A549 (cell line): ENCODE measurements at regions of chr17 and their contacts with region 1.

Region 1: GRCh38 chr17:29931231-29931932 is 1.4 kb upstream of the SSH2 start:
- DNase-seq: peak; percentile 67 to 85
- ATAC-seq: peak; percentile 60 to 75
- H3K4me3 ChIP-seq: peak overlapping the region; percentile 78
- H3K27ac ChIP-seq: peak overlapping the region; percentile 91 to 95; a peak in 4 of 6 replicates
- H3K4me1 ChIP-seq: peaks cover 31% of the 10 kb centered on the region
- CTCF ChIP-seq: peak; percentile 99
- EP300 ChIP-seq: no peak
- POLR2A ChIP-seq: no peak
- RAD21 ChIP-seq: peak; percentile 91 to 93

Region 2: DNA sequence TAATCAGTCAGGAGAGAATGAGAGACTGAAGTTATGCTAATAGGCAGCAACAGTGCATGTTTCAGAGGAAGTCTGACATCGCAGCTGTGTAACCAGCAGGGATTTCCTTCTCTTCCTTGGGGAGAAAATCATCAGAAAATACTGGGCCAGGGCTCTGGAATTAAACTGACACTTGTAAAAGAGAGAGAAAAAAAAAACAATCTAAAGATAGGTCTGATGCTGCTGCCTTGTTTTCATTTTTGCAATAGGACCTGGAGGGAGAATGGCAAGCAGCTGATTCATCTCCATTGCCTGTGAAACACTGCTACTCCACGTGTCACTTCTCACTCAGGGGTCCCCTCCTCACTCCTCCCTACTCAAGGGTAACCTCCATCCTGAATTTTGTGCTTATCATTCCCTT is 291.0 kb before region 1 on chr17:
- CTCF ChIA-PET with region 1: interaction called, 100 read pairs
- POLR2A ChIA-PET with region 1: interaction called, 39 read pairs
- DNase-seq: no peak
- ATAC-seq: no peak
- H3K4me3 ChIP-seq: no peak overlapping the region
- H3K27ac ChIP-seq: peak overlapping the region; percentile 10 to 82; a peak in 3 of 6 replicates
- H3K4me1 ChIP-seq: peaks cover 47% of the 10 kb centered on the region
- CTCF ChIP-seq: no peak
- EP300 ChIP-seq: no peak
- POLR2A ChIP-seq: no peak
- RAD21 ChIP-seq: no peak

Region 3: GRCh38 chr17:29826114-29826692 is 105.2 kb before region 1 on chr17:
- CTCF ChIA-PET with region 1: interaction called, 536 read pairs
- POLR2A ChIA-PET with region 1: no interaction called
- DNase-seq: no peak
- ATAC-seq: no peak
- H3K4me3 ChIP-seq: no peak overlapping the region
- H3K27ac ChIP-seq: no peak overlapping the region
- H3K4me1 ChIP-seq: no peaks in the 10 kb centered on the region
- CTCF ChIP-seq: no peak
- EP300 ChIP-seq: no peak
- POLR2A ChIP-seq: no peak
- RAD21 ChIP-seq: no peak

Region 4: GRCh38 chr17:29862127-29862526 is 69.3 kb before region 1 on chr17:
- CTCF ChIA-PET with region 1: interaction called, 32 read pairs
- POLR2A ChIA-PET with region 1: no interaction called
- DNase-seq: no peak
- ATAC-seq: no peak
- H3K4me3 ChIP-seq: no peak overlapping the region
- H3K27ac ChIP-seq: no peak overlapping the region
- H3K4me1 ChIP-seq: no peaks in the 10 kb centered on the region
- CTCF ChIP-seq: no peak
- EP300 ChIP-seq: no peak
- POLR2A ChIP-seq: no peak
- RAD21 ChIP-seq: no peak

Region 5: DNA sequence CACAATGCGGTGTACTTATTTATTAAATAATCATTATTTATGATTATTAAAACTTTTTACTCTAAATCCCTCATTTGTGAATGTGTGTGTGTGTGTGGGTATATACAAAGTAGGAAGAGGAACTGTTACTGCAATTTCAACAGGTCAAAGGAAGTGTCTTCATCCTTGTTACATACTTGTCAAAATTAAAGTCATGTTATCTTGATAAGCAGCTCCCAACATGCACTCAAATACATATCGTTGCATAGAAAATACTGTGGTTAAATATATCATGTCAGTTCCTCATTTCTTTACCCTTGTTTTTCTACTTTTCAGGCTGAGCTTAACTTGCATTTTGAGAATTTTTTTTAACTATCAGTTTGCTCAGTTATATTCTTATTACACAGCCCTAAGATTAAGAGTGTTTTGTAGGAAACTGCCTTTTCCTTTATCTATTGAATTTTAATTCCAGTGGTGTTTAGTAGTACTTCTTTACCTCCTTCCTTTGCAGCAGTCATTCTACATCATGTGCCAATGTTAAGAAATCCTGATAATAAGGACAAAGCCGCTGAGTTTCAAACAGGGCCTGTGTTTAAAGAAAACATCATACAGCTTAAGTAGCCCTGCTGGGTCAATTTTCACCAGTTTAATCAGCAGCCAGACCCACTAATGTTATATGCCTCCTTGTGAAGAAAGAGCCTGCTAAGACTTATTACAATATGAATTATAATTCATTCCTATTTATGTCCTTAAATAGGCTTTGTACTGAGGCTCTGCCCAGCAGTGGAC is 17.2 kb after region 1 on chr17:
- CTCF ChIA-PET with region 1: interaction called, 77 read pairs
- POLR2A ChIA-PET with region 1: no interaction called
- DNase-seq: no peak
- ATAC-seq: no peak
- H3K4me3 ChIP-seq: no peak overlapping the region
- H3K27ac ChIP-seq: no peak overlapping the region
- H3K4me1 ChIP-seq: no peaks in the 10 kb centered on the region
- CTCF ChIP-seq: no peak
- EP300 ChIP-seq: no peak
- POLR2A ChIP-seq: no peak
- RAD21 ChIP-seq: no peak

Region 6: DNA sequence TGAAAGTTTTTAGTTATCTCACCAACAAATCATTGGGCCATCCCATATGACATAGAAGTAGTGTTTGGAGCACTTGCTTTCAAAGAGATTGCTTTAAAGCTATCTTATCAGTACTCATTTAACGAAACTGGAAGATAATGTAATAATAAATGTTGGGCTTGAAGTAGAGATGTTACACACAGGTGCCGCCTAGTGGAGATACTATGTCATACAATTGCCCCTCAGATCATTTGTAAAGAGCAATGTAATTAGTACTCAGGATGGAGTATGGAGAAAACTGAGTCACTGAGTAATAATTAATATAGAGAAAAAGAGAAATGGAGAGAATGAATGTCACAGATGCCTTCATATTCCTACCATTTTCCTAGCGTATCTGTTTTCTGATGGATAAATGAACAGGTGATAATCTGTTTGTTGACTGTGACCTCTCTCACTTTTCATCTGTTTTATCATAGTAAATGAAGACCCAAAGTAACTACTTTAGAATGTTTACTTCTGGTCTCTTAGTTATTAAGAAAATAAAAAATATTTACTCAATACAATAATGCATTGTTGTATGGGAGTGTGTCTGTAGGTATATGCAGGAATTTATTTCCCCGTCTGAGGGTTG is 90.4 kb after region 1 on chr17:
- CTCF ChIA-PET with region 1: interaction called, 53 read pairs
- POLR2A ChIA-PET with region 1: interaction called, 4 read pairs
- DNase-seq: peak; percentile 65 to 70
- ATAC-seq: peak; percentile 73; a peak in 4 of 6 replicates
- H3K4me3 ChIP-seq: no peak overlapping the region
- H3K27ac ChIP-seq: no peak overlapping the region
- H3K4me1 ChIP-seq: no peaks in the 10 kb centered on the region
- CTCF ChIP-seq: peak; percentile 97
- EP300 ChIP-seq: no peak
- POLR2A ChIP-seq: no peak
- RAD21 ChIP-seq: peak; percentile 85 to 86

Region 7: GRCh38 chr17:30323895-30324319 is 392.5 kb after region 1 on chr17:
- CTCF ChIA-PET with region 1: no interaction called
- POLR2A ChIA-PET with region 1: no interaction called
- DNase-seq: peak in 1 of 2 experiments; percentile 43
- ATAC-seq: peak; percentile 49 to 68
- H3K4me3 ChIP-seq: no peak overlapping the region
- H3K27ac ChIP-seq: peak overlapping the region; percentile 33 to 48; a peak in 4 of 6 replicates
- H3K4me1 ChIP-seq: peaks cover 30% of the 10 kb centered on the region
- CTCF ChIP-seq: no peak
- EP300 ChIP-seq: no peak
- POLR2A ChIP-seq: no peak
- RAD21 ChIP-seq: no peak